K562 (cell line): ENCODE measurements at regions of chr7 and their contacts with region 1.

Region 1: GRCh38 chr7:30556840-30557239 is 37.8 kb upstream of the GARS1 start:
- DNase-seq: no peak
- ATAC-seq: no peak
- H3K4me3 ChIP-seq: no peak overlapping the region
- H3K27ac ChIP-seq: no peak overlapping the region
- H3K4me1 ChIP-seq: no peaks in the 10 kb centered on the region; a peak in 2 of 5 replicates
- H3K27me3 ChIP-seq: no peaks in the 10 kb centered on the region
- CTCF ChIP-seq: no peak
- EP300 ChIP-seq: no peak
- POLR2A ChIP-seq: no peak
- RAD21 ChIP-seq: no peak

Region 2: DNA sequence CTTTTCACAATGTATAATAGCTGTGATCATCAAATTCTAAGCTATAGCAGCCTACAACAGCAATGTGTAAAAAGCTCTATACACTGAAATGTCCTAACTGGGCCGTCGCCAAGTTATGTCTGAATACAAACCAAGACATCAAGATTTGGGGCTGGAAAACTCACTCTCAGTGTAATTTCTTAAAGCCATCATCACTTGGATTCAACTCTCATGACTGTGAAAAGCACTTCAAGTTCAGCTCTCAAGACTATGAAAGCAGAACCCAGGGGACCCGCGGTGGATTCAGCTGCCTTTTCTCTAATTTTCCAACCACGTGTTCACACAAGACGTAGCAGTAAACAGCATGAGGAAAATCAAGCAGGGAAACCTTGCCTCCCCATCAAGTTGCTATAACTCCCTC is 288.3 kb before region 1 on chr7:
- CTCF ChIA-PET with region 1: interaction called, 3 read pairs
- POLR2A ChIA-PET with region 1: no interaction called
- in situ Hi-C with region 1: loop called (anchors 5 kb)
- intact Hi-C with region 1: no loop called
- DNase-seq: no peak
- ATAC-seq: no peak
- H3K4me3 ChIP-seq: no peak overlapping the region
- H3K27ac ChIP-seq: no peak overlapping the region
- H3K4me1 ChIP-seq: peaks cover 0 to 9% of the 10 kb centered on the region in 2 experiments; a peak in 2 of 5 replicates
- H3K27me3 ChIP-seq: no peaks in the 10 kb centered on the region
- CTCF ChIP-seq: no peak
- EP300 ChIP-seq: no peak
- POLR2A ChIP-seq: no peak
- RAD21 ChIP-seq: no peak